A673 (cell line): ENCODE measurements at regions of chr19 and their contacts with region 1.

Region 1: DNA sequence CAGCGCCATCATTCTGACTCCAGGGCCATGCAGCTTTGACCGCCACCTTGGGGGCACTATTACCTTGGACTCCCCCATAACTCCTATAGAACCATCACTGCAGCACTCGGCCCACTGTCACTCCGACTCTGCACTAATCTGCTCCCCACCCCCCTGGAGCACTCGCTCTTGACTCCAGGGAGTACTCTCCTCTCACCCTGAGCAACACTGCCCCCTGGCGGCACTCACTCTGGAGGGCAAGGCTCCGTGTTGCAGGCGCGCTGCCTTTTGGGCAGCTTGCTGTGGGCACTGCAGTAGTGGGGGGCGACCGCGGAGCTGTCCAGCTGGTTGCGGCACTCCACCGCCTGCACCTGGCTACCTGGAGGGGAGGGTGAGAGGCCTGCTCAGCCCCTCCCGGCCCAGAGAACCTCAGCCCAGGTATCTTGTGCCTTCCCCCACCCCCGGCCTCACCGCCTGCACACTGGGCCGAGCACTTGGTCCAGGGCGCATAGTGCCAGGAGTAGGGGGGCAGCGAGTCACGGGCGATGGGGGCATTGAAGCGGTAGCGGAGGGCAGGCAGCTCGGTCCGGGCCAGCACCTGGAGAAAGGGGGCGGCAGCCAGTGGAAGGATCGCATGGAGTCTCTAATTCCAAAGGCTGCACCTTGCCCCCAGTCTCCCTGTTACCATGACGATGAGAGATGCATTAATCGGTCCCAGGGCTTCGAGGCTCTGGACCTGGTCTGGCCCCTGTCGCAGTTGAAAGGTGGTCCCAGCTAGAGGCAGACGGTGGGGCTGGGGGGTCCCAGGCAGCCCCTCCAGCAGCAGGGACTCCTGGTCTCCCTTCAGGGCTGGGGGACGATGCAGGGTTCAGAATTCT is 8.9 kb upstream of the MYO1F start:
- DNase-seq: peak; percentile 83
- H3K4me3 ChIP-seq: no peak overlapping the region
- H3K27ac ChIP-seq: no peak overlapping the region
- H3K4me1 ChIP-seq: no peaks in the 10 kb centered on the region
- H3K27me3 ChIP-seq: no peaks in the 10 kb centered on the region
- CTCF ChIP-seq: peak; percentile 84

Region 2: GRCh38 chr19:8517551-8518442 is 68.3 kb before region 1 on chr19:
- CTCF ChIA-PET with region 1: no interaction called
- POLR2A ChIA-PET with region 1: no interaction called
- intact Hi-C with region 1: no loop called
- DNase-seq: no peak
- H3K4me3 ChIP-seq: no peak overlapping the region
- H3K27ac ChIP-seq: no peak overlapping the region
- H3K4me1 ChIP-seq: peaks cover 8% of the 10 kb centered on the region
- H3K27me3 ChIP-seq: no peaks in the 10 kb centered on the region
- CTCF ChIP-seq: no peak

Region 3: GRCh38 chr19:8575467-8575997 is 10.6 kb before region 1 on chr19:
- CTCF ChIA-PET with region 1: interaction called, 9 read pairs
- POLR2A ChIA-PET with region 1: interaction called, 14 read pairs
- intact Hi-C with region 1: no loop called
- DNase-seq: peak; percentile 43
- H3K4me3 ChIP-seq: no peak overlapping the region
- H3K27ac ChIP-seq: no peak overlapping the region
- H3K4me1 ChIP-seq: peaks cover 14% of the 10 kb centered on the region
- H3K27me3 ChIP-seq: no peaks in the 10 kb centered on the region
- CTCF ChIP-seq: no peak

Region 4: GRCh38 chr19:8615813-8616596 is 29.9 kb after region 1 on chr19:
- CTCF ChIA-PET with region 1: interaction called, 11 read pairs
- POLR2A ChIA-PET with region 1: no interaction called
- intact Hi-C with region 1: no loop called
- DNase-seq: peak; percentile 81
- H3K4me3 ChIP-seq: no peak overlapping the region
- H3K27ac ChIP-seq: no peak overlapping the region
- H3K4me1 ChIP-seq: peaks cover 10% of the 10 kb centered on the region
- H3K27me3 ChIP-seq: no peaks in the 10 kb centered on the region
- CTCF ChIP-seq: peak; percentile 97